Posterior vena cava (tissue), 2 donors: ENCODE measurements at regions of chr9 and their contacts with region 1.

Region 1: GRCh38 chr9:135622415-135623020 is 16.8 kb downstream of the GLT6D1 start:
- DNase-seq: no peak

Region 2: DNA sequence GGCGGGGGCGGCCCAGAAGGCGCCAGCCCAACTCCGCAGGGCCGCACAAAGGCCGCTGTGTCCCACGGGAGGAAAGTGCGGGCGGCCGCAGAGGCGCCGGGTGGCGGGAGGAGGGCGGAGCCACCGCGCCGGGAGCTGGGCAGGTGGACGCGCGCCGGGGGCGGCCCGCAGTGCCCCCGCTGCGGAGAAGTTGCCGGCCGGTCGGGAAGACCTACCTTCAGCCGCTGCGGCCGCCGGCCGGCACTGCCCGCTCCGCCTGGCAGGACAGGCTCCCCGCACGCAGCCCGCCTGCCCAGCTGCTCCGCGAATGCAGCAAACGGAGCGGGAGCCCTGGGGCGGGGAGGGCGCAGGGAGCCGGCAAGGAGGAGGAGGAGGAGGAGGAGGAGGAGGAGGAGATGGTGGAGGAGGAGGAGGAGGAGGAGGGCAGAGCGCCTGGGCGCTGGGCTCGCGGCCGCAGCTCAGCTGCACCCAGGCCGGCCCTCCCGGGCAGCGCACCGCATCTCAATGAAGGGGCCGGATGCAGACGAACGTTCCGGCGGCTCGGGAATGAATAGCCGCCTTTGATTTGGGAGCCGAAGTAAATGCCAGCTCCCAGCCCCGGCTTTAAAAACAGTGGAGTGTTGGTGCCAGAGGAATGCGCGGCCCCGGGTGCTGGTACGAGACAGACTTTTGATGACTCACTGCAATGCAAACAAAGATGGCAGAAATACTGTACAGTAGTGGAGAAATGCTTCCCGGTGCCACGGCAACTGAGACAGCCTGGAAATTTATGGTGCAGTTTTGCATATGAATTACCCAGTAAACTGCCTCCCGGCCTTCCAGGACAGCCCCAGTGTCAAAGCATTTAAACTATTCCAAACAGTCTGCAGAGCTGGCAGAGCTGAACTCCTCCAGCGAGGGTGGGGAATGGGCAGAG is 429.3 kb after region 1 on chr9:
- intact Hi-C with region 1: loop called in 1 of 2 experiments (anchors 5 kb)
- DNase-seq: peak; percentile 85